ENCODE measurements at regions of chr16 and their contacts with region 1.

Region 1: DNA sequence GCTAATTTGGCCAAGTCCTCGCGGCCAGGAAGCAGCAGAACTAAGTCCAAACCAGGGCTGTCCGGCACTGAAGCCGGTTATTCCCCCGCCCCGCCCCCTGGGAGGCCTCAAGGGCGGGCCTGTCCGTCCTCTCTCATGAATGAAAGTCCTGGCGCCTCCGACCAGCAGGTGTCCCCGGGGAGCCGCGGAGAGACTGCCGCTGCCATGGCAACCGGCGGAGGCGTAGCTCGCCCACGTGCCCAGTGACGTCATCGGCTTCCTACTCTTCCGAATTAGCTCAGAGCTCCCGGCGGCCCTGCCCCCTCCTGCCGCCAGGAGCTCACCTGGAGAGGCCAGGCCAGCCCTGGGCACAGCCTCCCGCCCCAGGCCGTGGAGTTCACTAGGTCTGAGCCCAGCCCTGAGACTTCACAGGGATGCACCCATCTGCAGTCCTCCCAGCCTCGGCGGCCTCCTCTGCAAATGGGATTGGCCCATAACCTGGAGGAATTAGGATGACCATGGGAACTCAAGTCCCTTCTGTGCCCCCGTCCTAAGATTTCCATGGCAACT is 1.3 kb downstream of the SPATA2L start:
- DNase-seq: peak; percentile 99
- ATAC-seq: peak; percentile 76 to 93 (median 80)
- H3K4me3 ChIP-seq: peak overlapping the region in 11 of 12 donors; percentile 52 to 89 (median 70)
- H3K27ac ChIP-seq: peak overlapping the region in 11 of 12 donors; percentile 26 to 89 (median 74)
- H3K4me1 ChIP-seq: peaks cover 6 to 27% (median 21%) of the 10 kb centered on the region in 12 donors
- H3K27me3 ChIP-seq: no peaks in the 10 kb centered on the region
- CTCF ChIP-seq: peak; percentile 55 to 84 (median 64)
- POLR2A ChIP-seq: peak in 1 of 2 donors; percentile 43

Region 2: GRCh38 chr16:89187155-89188041 is 512.8 kb before region 1 on chr16:
- intact Hi-C with region 1: no loop called
- DNase-seq: peak in 3 of 5 donors; percentile 19 to 51 (median 20)
- ATAC-seq: no peak
- H3K4me3 ChIP-seq: no peak overlapping the region
- H3K27ac ChIP-seq: no peak overlapping the region
- H3K4me1 ChIP-seq: peaks cover 0 to 13% (median 7%) of the 10 kb centered on the region in 12 donors
- H3K27me3 ChIP-seq: peaks cover 0 to 6% (median 0%) of the 10 kb centered on the region in 9 donors
- CTCF ChIP-seq: no peak
- POLR2A ChIP-seq: no peak

Region 3: GRCh38 chr16:89545831-89546574 is 154.2 kb before region 1 on chr16:
- intact Hi-C with region 1: no loop called
- DNase-seq: no peak
- ATAC-seq: no peak
- H3K4me3 ChIP-seq: no peak overlapping the region
- H3K27ac ChIP-seq: no peak overlapping the region
- H3K4me1 ChIP-seq: peaks cover 0 to 11% (median 0%) of the 10 kb centered on the region in 12 donors
- H3K27me3 ChIP-seq: no peaks in the 10 kb centered on the region
- CTCF ChIP-seq: no peak
- POLR2A ChIP-seq: no peak

Region 4: DNA sequence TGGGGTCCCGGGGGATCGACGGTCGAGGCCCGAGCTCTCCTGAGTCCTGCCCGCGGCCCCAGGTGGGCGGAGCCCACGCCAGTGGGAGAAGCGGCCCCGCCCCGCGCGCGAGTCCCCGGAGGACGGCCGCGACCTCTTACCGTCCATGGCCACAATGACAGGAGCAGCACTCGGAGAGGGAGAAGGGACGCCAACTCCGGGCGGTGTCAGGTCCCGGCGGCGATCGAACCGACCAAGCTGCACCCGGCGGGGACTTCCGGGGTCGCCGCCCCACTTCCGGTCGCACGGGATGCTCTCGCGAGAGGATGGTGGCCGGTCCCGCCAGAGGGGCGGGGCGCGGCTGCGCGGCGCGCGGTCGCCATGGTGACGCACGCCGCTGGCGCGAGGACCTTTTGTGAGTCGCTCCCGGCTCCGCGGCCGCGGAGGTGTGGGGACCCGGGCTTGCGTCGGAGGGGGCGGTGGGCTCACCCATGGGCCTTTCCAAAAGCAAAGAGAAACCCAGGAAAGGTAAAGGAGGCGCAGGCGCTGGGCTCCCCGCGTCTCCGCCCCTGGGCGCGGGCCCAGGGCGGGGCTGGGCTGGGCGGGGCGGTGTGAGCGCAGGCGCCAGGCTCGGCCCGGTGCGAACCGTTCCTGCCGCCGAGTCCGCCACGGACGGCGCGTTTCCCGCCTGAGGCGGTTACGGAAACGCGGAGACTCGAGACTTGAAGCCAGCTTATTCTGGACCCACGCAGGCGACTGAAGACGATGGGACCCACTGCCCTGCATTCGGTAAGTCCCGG is 42.5 kb before region 1 on chr16 and contains the starts of genes CHMP1A and SPATA33:
- intact Hi-C with region 1: loop called in 1 of 10 experiments (anchors 5 kb)
- DNase-seq: peak; percentile 89 to 96 (median 91)
- ATAC-seq: peak; percentile 86 to 98 (median 96)
- H3K4me3 ChIP-seq: peak within 1 kb of the TSS; percentile 73 to 100 (median 94)
- H3K27ac ChIP-seq: peak within 1 kb of the TSS; percentile 66 to 91 (median 86)
- H3K4me1 ChIP-seq: peaks cover 5 to 24% (median 18%) of the 10 kb centered on the region in 12 donors
- H3K27me3 ChIP-seq: no peaks in the 10 kb centered on the region
- CTCF ChIP-seq: no peak
- POLR2A ChIP-seq: peak in 1 of 2 donors; percentile 63
- total RNA-seq, gene CHMP1A: 35.1 to 85.1 (median 44.6) TPM
- total RNA-seq, gene SPATA33: 0.94 to 5.1 (median 3.0) TPM

Region 5: DNA sequence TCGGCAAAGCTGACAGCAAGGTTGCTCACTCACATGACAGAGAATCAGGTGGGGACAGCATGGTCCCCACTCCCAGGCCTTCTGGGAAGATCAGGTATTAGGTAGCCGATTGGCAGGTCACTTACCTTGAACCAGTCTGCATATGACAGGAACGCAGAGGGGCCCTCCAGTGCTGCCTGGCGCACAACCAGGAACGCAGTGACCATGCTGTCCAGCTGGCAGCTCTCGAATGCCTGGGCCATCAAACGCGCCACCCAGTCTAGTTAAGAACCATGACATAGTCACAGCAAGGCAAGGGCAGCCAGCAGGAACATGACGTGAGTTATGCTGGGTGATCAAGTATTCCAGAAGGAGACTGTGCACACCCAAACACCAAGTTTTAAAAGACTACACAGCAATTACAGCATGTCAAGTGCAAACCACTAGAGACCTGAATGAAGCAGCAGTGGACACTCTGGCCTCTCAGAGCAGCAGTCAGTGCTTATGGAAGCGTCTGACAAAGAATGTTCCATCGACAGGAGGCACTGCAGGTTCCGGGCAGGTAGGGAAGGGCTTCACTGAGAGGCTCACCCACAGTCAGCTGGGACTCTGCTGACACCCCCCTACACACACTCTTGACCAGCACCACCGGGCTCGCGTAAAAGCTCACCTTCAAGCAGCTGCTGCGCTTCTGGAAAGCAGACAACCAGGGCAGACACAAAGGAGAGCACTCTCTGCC is 91.3 kb after region 1 on chr16:
- intact Hi-C with region 1: loop called in 8 of 10 experiments (anchors 5 to 10 kb)
- DNase-seq: no peak
- ATAC-seq: peak in 3 of 4 donors; percentile 22 to 47 (median 41)
- H3K4me3 ChIP-seq: no peak overlapping the region
- H3K27ac ChIP-seq: no peak overlapping the region
- H3K4me1 ChIP-seq: no peaks in the 10 kb centered on the region
- H3K27me3 ChIP-seq: no peaks in the 10 kb centered on the region
- CTCF ChIP-seq: no peak
- POLR2A ChIP-seq: no peak

Region 6: DNA sequence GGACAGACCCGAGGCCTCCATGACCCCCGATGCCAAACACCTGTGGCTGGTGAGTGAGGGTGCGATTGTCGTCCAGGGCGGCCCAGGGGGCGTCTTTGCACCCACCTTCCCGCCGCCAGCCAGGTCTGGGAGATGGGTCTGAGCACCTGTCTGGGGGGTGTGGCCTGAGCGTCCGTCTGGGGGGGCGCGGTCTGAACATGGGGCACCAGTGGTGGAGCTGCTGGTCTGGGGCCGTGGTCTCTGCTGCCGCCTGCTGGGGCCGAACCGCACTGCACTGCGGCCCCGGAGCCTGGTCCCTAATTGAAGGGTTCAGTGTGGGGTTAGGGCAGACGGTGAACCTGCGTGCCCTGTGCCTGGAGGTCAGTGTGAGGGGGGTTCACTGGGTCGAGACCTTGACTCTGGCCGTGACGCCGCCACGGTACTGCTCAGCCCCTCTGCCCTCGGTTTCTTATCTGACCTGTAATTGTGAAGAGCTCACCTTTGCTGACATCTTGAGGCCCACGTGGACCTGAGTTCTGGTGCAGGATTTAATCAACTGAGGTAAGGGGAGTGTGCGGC is 160.7 kb after region 1 on chr16:
- intact Hi-C with region 1: loop called in 8 of 10 experiments (anchors 2 to 10 kb)
- DNase-seq: peak; percentile 36 to 86 (median 60)
- ATAC-seq: peak; percentile 50 to 81 (median 76)
- H3K4me3 ChIP-seq: no peak overlapping the region
- H3K27ac ChIP-seq: no peak overlapping the region
- H3K4me1 ChIP-seq: peaks cover 0 to 35% (median 14%) of the 10 kb centered on the region in 12 donors
- H3K27me3 ChIP-seq: no peaks in the 10 kb centered on the region
- CTCF ChIP-seq: peak; percentile 87 to 98 (median 94)
- POLR2A ChIP-seq: no peak